Activated T-helper 2 cell treated with anti-CD3 and anti-CD28 coated beads, Interferon-gamma antibody, Interleukin-2, Interleukin-4, amounts not matched to agents 10 μg/mL and 5 μg/mL and 100 μg/mL, durations not matched to agents 14 hours and 24 hours and 36 hours (primary cell): ENCODE measurements at regions of chr1 and their contacts with region 1.

Region 1: DNA sequence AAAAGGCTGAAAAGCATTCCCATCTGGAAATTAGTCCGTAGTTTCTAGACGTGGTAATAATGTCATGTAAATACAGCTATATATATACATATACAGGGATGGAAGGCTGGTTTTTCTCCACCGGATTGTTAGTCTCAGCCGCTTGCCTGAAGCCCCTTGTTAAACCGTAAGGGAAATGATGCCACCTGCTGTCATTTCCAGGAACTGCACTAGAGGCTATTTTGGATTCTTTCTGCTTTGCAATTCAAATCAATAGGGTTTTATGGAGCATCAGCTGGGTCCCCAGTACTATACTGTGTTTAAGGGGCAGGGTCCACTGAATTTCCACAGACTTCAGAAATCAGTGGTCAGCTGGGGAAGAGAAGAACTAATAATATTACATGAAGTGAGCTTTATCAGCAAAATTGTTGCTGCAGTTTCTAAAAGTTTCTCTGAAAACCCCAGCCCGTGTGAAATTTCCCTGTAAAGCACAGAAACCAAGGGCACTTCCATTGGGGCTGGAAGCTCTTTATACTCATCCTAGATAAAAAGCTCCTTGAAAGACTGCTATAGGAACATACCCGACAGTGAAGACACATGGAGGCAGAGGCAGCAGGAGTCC is 33.8 kb upstream of the MPZL1 start:
- DNase-seq: peak; percentile 59
- H3K4me3 Mint-ChIP-seq: no peak overlapping the region
- H3K27ac Mint-ChIP-seq: peak overlapping the region; percentile 85
- H3K4me1 Mint-ChIP-seq: peaks cover 31% of the 10 kb centered on the region
- H3K27me3 Mint-ChIP-seq: no peaks in the 10 kb centered on the region

Region 2: DNA sequence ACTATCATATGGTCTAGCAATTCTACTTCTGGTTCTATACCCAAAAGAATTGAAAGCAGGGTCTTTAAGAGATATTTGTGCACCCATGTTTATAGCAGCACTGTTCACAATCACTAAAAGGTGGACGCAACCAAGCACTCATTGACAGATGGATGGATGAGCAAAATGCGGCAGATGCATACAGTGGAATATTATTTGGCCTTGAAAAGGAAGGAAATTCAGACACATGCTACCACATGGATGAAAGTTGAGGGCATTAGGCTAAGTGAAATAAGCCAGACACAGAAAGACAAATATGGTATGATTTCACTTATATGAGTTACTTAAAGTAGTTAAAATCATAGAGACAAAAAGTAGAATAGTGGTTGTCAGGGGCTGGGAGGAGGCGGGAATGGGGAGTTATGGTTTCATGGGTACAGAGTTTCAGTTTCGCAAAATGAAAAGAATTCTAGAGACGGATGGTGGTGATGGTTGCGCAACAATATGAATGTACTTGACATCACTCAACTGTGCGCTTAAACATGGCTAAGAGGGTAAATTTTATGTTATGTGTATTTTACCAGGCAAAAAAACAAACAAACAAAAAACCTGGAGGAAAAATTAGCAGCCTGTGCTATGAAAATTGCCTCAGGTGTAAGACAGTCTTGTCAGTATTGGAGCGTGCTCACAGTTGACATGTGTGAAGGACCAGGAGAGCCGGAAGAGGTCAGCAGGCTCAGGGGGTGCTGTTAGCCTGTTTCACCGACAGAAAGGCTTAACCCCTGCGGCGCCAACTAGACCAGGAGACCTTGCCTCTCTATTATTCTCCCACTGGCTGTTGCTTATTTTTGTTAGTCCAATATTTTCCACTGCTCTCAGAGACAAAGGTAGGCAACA is 196.2 kb before region 1 on chr1:
- intact Hi-C with region 1: loop called (anchors 5 kb)
- DNase-seq: no peak
- H3K4me3 Mint-ChIP-seq: peak overlapping the region; percentile 72
- H3K27ac Mint-ChIP-seq: peak overlapping the region; percentile 91
- H3K4me1 Mint-ChIP-seq: peaks cover 83% of the 10 kb centered on the region
- H3K27me3 Mint-ChIP-seq: no peaks in the 10 kb centered on the region

Region 3: DNA sequence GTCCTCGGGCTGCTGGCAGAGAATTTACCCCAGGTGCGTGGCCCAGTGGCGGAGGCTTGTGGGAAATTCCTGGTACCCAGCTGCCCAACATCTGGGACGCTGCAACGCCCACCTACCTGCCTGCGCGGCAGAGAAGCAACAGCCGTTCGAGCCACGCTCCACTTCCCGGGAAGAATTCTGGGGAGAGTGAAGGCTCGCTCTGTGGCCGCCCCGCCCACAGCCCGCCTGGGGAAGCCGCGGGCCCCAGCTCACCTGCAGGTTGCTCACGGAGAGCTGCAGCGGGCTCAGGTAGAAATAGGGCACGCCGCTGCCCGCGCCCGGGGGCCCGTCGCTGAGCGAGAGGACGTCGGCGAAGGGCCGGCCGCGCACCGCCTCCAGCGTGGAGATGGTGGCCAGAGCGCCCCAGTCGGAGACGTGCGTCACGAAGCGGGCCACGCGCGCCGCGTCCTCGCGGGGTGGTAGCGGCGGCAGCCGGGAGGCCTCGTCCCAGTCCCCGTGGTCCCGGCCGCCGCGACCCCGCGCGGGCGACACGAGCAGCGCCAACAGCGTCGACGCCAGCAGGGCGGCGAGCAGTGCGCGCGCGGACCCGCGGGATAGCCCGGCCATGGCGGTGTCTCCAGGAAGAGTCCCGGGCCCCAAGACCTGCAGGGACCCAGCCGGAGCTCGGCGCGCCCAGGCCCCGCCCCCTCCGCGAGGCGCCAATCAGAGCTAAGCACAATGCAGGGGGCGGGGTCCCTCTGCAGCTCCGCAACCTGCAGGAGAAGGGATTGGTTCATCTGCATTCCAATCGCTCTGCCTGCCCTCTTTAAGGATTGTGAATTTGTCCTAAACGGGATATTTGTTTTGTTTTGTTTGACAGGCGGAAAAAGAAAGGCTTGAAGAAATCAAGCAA is 134.6 kb before region 1 on chr1 and contains the start of gene CREG1:
- intact Hi-C with region 1: loop called (anchors 1 kb)
- DNase-seq: peak; percentile 86
- H3K4me3 Mint-ChIP-seq: peak within 1 kb of the TSS; percentile 86
- H3K27ac Mint-ChIP-seq: peak within 1 kb of the TSS; percentile 40
- H3K4me1 Mint-ChIP-seq: peaks cover 27% of the 10 kb centered on the region
- H3K27me3 Mint-ChIP-seq: peaks cover 8% of the 10 kb centered on the region
- total RNA-seq, gene CREG1: 13.8 and 15.6 TPM in 2 replicates

Region 4: DNA sequence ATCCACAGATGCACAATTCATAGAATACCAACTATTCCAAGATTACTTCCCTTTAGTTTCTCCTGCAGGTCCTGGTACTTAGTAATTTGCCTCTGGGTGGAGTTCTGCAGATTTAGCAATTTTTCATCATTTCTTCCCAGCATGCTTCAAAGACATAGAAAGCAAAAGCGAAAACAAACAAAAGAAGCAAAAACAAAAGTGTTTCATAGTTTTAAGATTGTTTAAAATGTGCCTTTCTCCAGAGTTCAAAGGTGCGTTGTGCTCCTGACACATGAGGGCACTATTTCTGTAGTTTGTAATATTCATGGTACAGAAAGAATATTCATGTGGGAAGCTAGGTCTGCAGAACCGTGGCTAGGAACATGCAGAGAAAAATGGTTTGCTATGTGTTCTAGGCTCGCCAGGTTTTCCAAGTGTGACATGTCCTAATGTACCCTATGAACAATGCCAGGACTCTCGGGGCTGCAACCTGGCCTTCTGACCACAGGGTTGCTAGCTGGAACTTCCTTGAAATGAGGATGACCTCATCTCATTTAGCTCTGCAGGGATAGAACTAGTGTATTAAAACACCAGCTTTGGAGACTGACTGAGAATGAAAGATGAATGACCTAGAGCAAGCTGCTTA is 88.0 kb before region 1 on chr1:
- intact Hi-C with region 1: loop called (anchors 1 kb)
- DNase-seq: peak; percentile 38
- H3K4me3 Mint-ChIP-seq: peak overlapping the region; percentile 37
- H3K27ac Mint-ChIP-seq: peak overlapping the region; percentile 72
- H3K4me1 Mint-ChIP-seq: peaks cover 46% of the 10 kb centered on the region
- H3K27me3 Mint-ChIP-seq: no peaks in the 10 kb centered on the region

Region 5: DNA sequence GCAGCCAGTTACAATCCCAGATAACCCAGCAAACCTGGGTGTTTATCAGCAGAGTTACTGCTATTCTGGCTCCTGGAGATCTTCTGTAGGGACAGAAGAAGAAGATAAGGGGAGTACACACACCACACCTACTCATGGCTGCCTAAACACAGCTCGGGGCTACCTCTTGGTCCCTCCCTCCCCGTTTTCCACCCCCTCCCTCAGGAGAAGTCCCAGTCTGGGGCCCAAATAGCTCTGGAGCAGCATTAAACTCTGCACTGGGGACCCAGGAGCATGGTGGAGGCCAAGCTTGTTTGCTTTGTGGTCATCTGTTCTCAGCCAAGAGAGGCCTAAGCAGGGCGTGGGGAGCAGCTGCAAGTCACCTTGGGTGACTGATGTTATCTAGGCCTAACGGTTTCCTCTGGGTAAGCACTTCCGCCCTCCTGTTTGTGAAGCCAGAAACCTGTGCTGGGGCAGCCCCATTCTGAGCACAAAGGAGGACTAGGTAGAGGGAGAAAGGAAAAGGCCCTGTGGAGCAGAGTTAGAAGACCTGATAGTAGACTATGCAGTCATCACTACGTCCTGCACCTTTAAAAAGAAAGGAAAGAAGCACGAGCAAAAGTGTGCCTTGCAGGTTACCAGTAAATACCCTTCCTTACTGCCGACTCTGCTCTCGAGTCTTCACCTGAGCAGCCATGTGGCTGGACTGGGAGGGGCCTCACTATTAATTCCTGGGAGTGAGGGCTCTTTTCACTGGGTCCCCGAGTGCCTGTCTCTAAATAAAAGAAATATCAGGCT is 60.0 kb before region 1 on chr1:
- intact Hi-C with region 1: loop called (anchors 2 kb)
- DNase-seq: peak; percentile 84
- H3K4me3 Mint-ChIP-seq: peak overlapping the region; percentile 96
- H3K27ac Mint-ChIP-seq: peak overlapping the region; percentile 95
- H3K4me1 Mint-ChIP-seq: peaks cover 55% of the 10 kb centered on the region
- H3K27me3 Mint-ChIP-seq: no peaks in the 10 kb centered on the region

Region 6: DNA sequence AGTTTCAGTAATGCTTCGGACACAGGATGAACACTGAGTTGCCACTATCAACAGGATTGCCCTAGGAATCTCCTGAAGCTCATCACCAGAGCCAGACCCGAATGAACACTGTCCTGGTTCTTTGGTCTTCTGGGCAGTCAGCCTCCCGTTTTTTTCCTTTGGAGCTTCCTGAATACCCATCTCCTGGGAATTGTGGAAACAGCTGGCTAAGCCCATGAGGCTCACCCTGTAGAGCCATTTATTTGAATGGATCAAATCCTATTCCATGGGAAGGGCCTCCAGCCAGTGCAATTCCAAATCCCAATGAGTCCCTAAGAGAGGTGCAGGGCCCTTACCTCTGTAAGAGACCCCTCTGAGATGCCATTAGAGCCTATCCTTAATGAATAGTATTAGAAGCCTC is 52.1 kb before region 1 on chr1:
- intact Hi-C with region 1: loop called (anchors 2 kb)
- DNase-seq: no peak
- H3K4me3 Mint-ChIP-seq: peak overlapping the region; percentile 63
- H3K27ac Mint-ChIP-seq: peak overlapping the region; percentile 90
- H3K4me1 Mint-ChIP-seq: peaks cover 67% of the 10 kb centered on the region
- H3K27me3 Mint-ChIP-seq: no peaks in the 10 kb centered on the region